ENCODE measurements at regions of chr2 and their contacts with region 1.

Region 1: GRCh38 chr2:2698182-2699120 is 367.4 kb upstream of the MYT1L start:
- DNase-seq: peak; percentile 53
- H3K4me3 Mint-ChIP-seq: no peak overlapping the region
- H3K27ac Mint-ChIP-seq: no peak overlapping the region
- H3K4me1 Mint-ChIP-seq: peaks cover 5% of the 10 kb centered on the region
- H3K27me3 Mint-ChIP-seq: no peaks in the 10 kb centered on the region

Region 2: DNA sequence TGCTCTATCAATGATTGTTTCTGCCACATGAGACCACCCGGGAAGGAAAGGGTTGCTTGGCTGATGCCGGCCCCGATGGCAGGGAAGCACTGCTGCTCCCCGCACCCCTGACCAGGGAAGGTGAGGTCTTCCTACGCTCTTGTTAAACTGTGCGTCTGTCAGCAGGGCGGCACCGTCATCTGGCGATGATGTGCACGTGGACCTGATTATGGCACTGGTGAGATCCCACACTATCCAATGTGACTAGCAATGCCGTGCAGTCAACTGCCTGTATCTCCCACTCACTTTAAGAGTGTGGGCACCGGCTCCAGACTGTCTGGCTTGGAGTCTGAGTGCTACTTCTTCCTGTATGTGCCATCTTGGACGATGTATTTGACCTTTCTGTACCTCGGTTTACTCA is 576.6 kb before region 1 on chr2:
- CTCF ChIA-PET with region 1: no interaction called
- intact Hi-C with region 1: loop called (anchors 5 kb)
- DNase-seq: no peak
- H3K4me3 Mint-ChIP-seq: no peak overlapping the region
- H3K27ac Mint-ChIP-seq: no peak overlapping the region
- H3K4me1 Mint-ChIP-seq: peaks cover 4% of the 10 kb centered on the region
- H3K27me3 Mint-ChIP-seq: peaks cover 3% of the 10 kb centered on the region